CD4-positive, alpha-beta T cell (primary cell): ENCODE measurements at regions of chr15 and their contacts with region 1.

Region 1: DNA sequence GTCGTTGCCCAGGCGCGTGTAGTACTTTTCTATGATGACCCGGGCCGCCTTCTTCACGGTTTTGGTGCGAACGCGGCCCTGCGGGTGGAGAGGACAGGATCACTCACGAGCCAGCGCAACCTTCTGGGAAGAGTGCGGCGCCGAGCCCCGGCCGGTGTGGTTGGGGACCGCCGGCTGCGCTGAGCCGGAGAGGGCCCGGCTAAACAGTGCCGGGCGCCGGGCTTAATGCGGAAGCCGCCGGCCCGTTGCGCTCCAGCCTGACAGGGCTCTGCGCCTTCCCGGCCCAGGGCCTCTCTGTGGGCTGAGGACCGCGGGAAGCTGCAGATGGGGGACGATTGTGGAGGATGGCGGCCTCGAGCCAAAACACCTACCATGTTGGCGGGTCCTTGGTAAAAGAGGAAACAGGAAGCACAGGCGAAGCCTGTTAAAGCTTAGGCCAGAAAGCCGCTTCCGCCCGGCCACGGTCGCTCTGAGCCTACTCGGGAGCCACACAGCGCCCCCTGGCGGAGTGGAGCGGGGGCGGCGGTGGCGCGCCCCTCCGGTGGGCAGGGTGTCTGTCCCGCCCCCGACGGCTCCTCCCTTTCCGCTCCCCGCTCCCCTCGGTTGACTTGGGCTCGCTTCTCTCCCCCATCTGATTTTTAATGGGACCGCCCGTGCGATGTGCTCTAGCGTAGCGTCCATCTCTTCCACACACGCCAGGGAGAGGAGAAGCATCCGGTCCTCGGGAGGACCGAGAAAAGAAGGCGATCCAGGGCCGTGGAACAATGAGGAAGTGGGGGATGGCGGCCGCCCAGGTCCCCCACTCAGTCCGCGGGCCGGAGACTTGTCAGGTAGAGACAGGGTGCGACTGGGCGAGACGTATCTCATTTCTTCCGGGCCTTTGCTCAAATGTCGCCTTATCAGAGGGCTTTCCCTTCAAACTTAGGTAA is at the start of gene RPS17:
- DNase-seq: peak; percentile 96 to 99 (median 98)
- ATAC-seq: peak; percentile 91
- H3K4me3 ChIP-seq: peak within 1 kb of the TSS; percentile 85
- H3K4me3 Mint-ChIP-seq: peak within 1 kb of the TSS; percentile 99
- H3K27ac ChIP-seq: peak within 1 kb of the TSS; percentile 81 to 86
- H3K27ac Mint-ChIP-seq: peak within 1 kb of the TSS; percentile 97
- H3K4me1 ChIP-seq: peaks cover 32% of the 10 kb centered on the region
- H3K4me1 Mint-ChIP-seq: peaks cover 39% of the 10 kb centered on the region
- H3K27me3 ChIP-seq: no peaks in the 10 kb centered on the region
- H3K27me3 Mint-ChIP-seq: no peaks in the 10 kb centered on the region
- CTCF ChIP-seq: peak; percentile 99
- total RNA-seq, gene RPS17: 3,141 to 3,180 TPM

Region 2: DNA sequence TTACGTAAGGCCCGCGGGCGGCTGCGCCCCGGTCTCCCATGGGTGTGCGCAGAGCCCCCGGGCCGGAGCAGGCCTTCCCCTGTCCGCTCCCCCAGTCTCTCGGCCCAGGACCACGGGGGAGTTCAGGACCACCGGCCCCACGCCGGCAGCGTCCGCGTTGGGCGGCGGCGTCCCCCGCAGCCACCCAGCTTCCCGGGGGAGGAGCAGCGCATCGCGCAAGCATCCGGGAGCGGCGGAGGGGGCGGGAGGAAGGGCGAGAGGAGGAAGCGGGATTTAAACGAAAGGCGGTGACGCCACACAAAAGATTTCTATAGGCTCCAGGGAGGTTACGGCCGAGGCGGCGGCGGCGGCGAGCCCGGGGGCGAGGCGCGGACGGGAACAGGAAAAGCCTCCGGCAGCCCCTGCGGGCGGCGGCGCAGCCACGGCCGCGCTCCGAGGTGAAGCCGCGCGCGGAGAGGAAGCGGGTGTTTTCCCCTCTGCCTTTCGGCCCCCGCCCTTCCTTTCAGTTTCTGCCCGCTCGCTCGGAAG is 1539.6 kb before region 1 on chr15 and contains the start of gene TLNRD1:
- CTCF ChIA-PET with region 1: no interaction called
- POLR2A ChIA-PET with region 1: no interaction called
- intact Hi-C with region 1: loop called in 1 of 2 experiments (anchors 5 kb)
- DNase-seq: peak; percentile 63 to 94 (median 76)
- ATAC-seq: peak; percentile 67
- H3K4me3 ChIP-seq: peak within 1 kb of the TSS; percentile 97
- H3K4me3 Mint-ChIP-seq: peak within 1 kb of the TSS; percentile 95
- H3K27ac ChIP-seq: peak within 1 kb of the TSS; percentile 94 to 96
- H3K27ac Mint-ChIP-seq: peak within 1 kb of the TSS; percentile 92
- H3K4me1 ChIP-seq: peaks cover 41% of the 10 kb centered on the region
- H3K4me1 Mint-ChIP-seq: peaks cover 62% of the 10 kb centered on the region
- H3K27me3 ChIP-seq: no peaks in the 10 kb centered on the region
- H3K27me3 Mint-ChIP-seq: no peaks in the 10 kb centered on the region
- CTCF ChIP-seq: no peak
- total RNA-seq, gene TLNRD1: 10.5 to 12.3 TPM

Region 3: GRCh38 chr15:82749951-82750830 is 209.9 kb after region 1 on chr15:
- CTCF ChIA-PET with region 1: interaction called, 3 read pairs
- POLR2A ChIA-PET with region 1: interaction called, 20 read pairs
- intact Hi-C with region 1: loop called in 1 of 2 experiments (anchors 1 kb)
- DNase-seq: peak; percentile 59 to 90 (median 77)
- ATAC-seq: peak; percentile 93
- H3K4me3 ChIP-seq: peak overlapping the region; percentile 84
- H3K4me3 Mint-ChIP-seq: peak overlapping the region; percentile 99
- H3K27ac ChIP-seq: peak overlapping the region; percentile 62 to 82
- H3K27ac Mint-ChIP-seq: peak overlapping the region; percentile 85
- H3K4me1 ChIP-seq: peaks cover 28% of the 10 kb centered on the region
- H3K4me1 Mint-ChIP-seq: peaks cover 57% of the 10 kb centered on the region
- H3K27me3 ChIP-seq: no peaks in the 10 kb centered on the region
- H3K27me3 Mint-ChIP-seq: no peaks in the 10 kb centered on the region
- CTCF ChIP-seq: no peak

Region 4: DNA sequence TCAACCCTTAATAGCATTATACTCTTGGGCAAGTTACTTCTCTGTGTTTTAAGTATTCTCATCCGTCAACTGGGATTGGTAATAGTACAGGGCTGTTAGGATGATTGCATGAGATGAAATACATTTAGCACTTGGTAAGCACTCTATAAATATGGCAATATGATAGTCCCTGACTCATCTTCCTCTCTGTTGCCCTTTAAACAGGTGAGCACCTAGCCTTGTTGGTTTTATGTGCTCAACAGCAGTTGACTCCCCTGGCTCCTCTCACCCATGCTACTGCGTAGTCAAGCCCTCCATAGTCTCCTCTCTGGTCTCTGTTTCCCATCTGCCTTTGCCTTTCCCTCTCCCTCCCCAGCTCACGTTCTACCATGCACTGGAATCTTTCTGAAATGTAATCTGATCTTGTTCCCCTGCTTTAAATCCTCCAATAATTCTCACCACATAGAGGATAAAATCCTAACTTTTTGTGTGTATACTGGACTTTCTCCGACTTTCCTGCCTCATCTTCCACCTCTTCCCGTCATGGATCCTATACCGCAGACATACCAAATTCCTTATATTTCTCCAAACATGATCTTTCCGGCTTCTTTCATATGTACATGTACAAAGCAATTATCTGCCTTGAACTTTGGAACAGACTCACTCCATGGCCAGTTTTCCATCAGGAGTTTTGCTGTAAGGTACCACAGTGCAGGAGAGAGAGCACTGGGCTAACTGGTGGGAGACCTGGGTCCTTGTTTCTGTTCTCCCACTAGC is 223.2 kb after region 1 on chr15:
- CTCF ChIA-PET with region 1: no interaction called
- POLR2A ChIA-PET with region 1: no interaction called
- intact Hi-C with region 1: no loop called
- DNase-seq: no peak
- ATAC-seq: no peak
- H3K4me3 ChIP-seq: no peak overlapping the region
- H3K4me3 Mint-ChIP-seq: no peak overlapping the region
- H3K27ac ChIP-seq: no peak overlapping the region
- H3K27ac Mint-ChIP-seq: no peak overlapping the region
- H3K4me1 ChIP-seq: no peaks in the 10 kb centered on the region
- H3K4me1 Mint-ChIP-seq: no peaks in the 10 kb centered on the region
- H3K27me3 ChIP-seq: no peaks in the 10 kb centered on the region
- H3K27me3 Mint-ChIP-seq: no peaks in the 10 kb centered on the region
- CTCF ChIP-seq: no peak

Region 5: DNA sequence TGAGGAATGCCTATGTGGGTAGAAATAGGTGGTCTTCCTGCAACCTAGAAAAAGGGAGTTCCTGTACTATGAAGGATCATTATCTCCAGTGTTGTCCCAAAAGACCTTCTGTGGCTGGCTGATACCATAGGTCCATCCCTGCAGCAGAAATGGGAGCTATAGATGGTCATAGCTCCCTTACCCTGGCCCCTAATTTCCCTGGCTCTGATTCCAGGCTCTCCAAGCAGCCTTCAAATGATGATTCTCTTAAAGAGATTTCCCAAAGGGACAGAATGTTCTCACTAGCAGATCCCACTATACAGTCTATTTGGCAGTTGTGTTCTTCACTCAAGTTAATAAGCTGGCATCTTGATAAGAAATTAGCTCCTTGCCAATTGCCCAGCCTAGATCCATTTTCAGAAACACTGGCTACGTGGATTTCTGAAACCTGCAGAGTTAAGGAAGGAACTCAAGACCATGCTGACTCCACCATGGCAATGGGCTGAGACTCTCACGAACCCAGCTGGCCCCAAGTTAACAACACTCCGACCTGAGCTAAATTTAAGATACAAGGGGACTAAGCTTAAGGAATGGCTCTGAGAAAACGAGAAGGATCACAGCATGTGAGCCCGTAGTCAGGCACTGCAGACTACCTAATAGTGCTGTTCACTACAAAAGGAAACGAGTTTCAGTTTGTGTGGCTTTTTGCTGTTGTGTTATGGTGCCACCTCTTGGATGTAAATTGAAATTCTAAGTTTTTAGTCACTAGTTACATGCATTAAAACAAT is 459.8 kb after region 1 on chr15:
- CTCF ChIA-PET with region 1: no interaction called
- POLR2A ChIA-PET with region 1: interaction called, 11 read pairs
- intact Hi-C with region 1: loop called in 1 of 2 experiments (anchors 5 kb)
- DNase-seq: peak in 9 of 14 experiments; percentile 2 to 74 (median 11)
- ATAC-seq: peak; percentile 95
- H3K4me3 ChIP-seq: peak overlapping the region; percentile 20
- H3K4me3 Mint-ChIP-seq: peak overlapping the region; percentile 70
- H3K27ac ChIP-seq: no peak overlapping the region
- H3K27ac Mint-ChIP-seq: peak overlapping the region; percentile 73
- H3K4me1 ChIP-seq: peaks cover 8% of the 10 kb centered on the region
- H3K4me1 Mint-ChIP-seq: peaks cover 13% of the 10 kb centered on the region
- H3K27me3 ChIP-seq: no peaks in the 10 kb centered on the region
- H3K27me3 Mint-ChIP-seq: no peaks in the 10 kb centered on the region
- CTCF ChIP-seq: peak; percentile 66

Region 6: GRCh38 chr15:83066734-83067637 is 526.7 kb after region 1 on chr15 and contains the start of gene BTBD1:
- CTCF ChIA-PET with region 1: no interaction called
- POLR2A ChIA-PET with region 1: interaction called, 17 read pairs
- intact Hi-C with region 1: loop called in 1 of 2 experiments (anchors 2 kb)
- DNase-seq: peak; percentile 53 to 90 (median 74)
- ATAC-seq: peak; percentile 73
- H3K4me3 ChIP-seq: peak within 1 kb of the TSS; percentile 82
- H3K4me3 Mint-ChIP-seq: peak within 1 kb of the TSS; percentile 88
- H3K27ac ChIP-seq: peak within 1 kb of the TSS; percentile 57 to 74
- H3K27ac Mint-ChIP-seq: peak within 1 kb of the TSS; percentile 81
- H3K4me1 ChIP-seq: peaks cover 22% of the 10 kb centered on the region
- H3K4me1 Mint-ChIP-seq: peaks cover 9% of the 10 kb centered on the region
- H3K27me3 ChIP-seq: no peaks in the 10 kb centered on the region
- H3K27me3 Mint-ChIP-seq: no peaks in the 10 kb centered on the region
- CTCF ChIP-seq: no peak
- total RNA-seq, gene BTBD1: 26.3 to 27.5 TPM

Region 7: DNA sequence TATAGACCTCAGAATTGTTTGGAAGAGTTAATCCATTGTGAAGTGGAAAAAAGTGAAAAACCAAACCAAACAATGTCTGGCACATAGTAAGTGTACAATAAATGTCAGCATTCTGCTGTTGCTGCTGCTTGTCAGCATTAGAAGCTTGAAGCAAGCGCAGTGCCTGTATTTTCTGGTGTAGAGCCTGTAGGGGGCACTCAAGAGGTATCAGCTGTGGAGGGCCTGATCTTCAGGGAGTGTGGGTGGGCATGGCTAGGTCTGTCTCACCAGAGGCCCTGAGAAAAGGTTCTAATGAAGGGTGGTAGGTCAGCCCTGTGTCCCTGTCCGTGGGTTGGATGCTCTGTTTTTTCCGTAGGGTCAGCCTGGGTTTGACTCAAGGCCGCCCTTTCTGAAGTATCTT is 1117.2 kb after region 1 on chr15:
- CTCF ChIA-PET with region 1: no interaction called
- POLR2A ChIA-PET with region 1: no interaction called
- intact Hi-C with region 1: no loop called
- DNase-seq: no peak
- ATAC-seq: no peak
- H3K4me3 ChIP-seq: no peak overlapping the region
- H3K4me3 Mint-ChIP-seq: no peak overlapping the region
- H3K27ac ChIP-seq: no peak overlapping the region
- H3K27ac Mint-ChIP-seq: no peak overlapping the region
- H3K4me1 ChIP-seq: no peaks in the 10 kb centered on the region
- H3K4me1 Mint-ChIP-seq: no peaks in the 10 kb centered on the region
- H3K27me3 ChIP-seq: peaks cover 13 to 18% of the 10 kb centered on the region in 2 experiments
- H3K27me3 Mint-ChIP-seq: peaks cover 32% of the 10 kb centered on the region
- CTCF ChIP-seq: no peak